Activated CD4-positive, alpha-beta T cell treated with anti-CD3 and anti-CD28 coated beads for 36 hours (primary cell): ENCODE measurements at regions of chr4 and their contacts with region 1.

Region 1: GRCh38 chr4:168183717-168184608 is 91.6 kb downstream of the ANXA10 start:
- DNase-seq: no peak
- ATAC-seq: no peak
- H3K4me3 Mint-ChIP-seq: no peak overlapping the region
- H3K27ac Mint-ChIP-seq: no peak overlapping the region
- H3K4me1 Mint-ChIP-seq: peaks cover 4% of the 10 kb centered on the region
- H3K27me3 Mint-ChIP-seq: no peaks in the 10 kb centered on the region

Region 2: DNA sequence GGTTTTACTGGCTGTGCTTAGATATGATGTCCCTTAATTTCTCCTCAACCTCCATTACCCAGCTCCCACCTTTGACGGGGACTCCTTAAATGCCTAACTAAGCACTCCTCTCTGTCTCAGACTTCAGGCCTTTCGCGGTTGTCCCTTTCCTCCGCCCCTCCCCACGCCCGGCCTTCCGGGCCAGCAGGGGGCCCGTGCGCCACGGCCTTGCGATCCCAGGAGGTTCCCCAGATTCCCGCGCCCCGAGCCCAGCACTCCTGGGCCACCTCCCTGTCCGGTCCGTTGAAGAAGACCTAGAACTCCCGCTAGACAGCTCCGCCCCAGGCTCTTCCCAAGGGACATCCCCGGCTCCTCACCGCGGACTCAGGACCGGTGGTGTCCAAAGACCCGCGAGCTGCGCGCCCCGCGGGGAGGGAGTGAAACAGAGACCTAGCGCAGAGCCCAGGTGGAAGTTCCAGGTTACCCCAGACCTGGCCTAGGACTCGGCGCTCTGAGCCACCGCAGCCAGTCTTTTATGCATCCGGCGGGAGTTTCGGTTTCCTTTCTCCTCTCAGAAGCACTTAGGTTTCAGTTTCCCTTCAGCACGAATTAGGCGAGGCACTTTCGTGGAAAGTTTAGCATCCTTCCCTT is 134.4 kb after region 1 on chr4 and contains the start of gene DDX60:
- CTCF ChIA-PET with region 1: no interaction called
- POLR2A ChIA-PET with region 1: no interaction called
- intact Hi-C with region 1: no loop called
- DNase-seq: peak; percentile 91
- ATAC-seq: peak; percentile 93
- H3K4me3 Mint-ChIP-seq: peak within 1 kb of the TSS; percentile 85
- H3K27ac Mint-ChIP-seq: peak within 1 kb of the TSS; percentile 92
- H3K4me1 Mint-ChIP-seq: peaks cover 44% of the 10 kb centered on the region
- H3K27me3 Mint-ChIP-seq: no peaks in the 10 kb centered on the region
- total RNA-seq, gene DDX60: 22.2 to 23.8 TPM

Region 3: DNA sequence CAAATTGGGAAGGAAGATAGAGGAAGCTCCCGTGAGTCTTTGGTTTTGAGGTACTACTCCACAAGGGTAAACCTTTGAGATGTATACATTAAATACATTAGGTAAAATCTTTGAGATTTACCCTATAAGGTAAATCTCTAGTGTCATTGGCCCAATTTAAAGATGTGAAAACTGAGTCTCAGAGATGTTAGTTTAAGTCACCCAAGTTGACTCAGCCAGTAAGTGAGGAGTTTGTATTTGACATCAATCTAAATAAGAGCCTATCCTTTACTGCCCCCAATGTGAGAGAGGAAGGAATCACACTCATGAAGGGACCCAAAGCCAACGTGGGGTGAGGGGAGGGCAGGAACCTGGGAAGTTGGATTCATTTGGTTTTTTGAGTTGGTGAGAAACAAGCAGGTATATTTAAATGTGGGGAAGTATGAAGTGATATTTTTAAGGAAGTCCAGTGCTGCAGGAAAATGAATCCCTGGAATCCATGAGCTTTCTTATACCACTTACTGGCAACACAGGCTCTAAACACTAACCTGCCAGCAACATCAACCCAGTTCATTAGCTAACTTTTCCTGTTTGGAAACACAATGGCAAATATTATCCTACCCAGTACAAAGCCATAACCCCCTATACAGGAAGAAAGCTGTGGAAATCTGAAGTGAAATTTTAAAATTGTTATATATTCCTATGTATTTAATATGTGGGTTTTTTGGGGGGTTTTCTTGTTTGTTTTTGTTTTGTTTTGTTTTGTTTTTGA is 368.2 kb after region 1 on chr4:
- CTCF ChIA-PET with region 1: no interaction called
- POLR2A ChIA-PET with region 1: no interaction called
- intact Hi-C with region 1: loop called in 1 of 2 experiments (anchors 2 kb)
- DNase-seq: no peak
- ATAC-seq: peak; percentile 74
- H3K4me3 Mint-ChIP-seq: no peak overlapping the region
- H3K27ac Mint-ChIP-seq: no peak overlapping the region
- H3K4me1 Mint-ChIP-seq: peaks cover 2% of the 10 kb centered on the region
- H3K27me3 Mint-ChIP-seq: no peaks in the 10 kb centered on the region

Region 4: GRCh38 chr4:169492438-169493163 is 1308.6 kb after region 1 on chr4:
- CTCF ChIA-PET with region 1: no interaction called
- POLR2A ChIA-PET with region 1: no interaction called
- intact Hi-C with region 1: loop called in 1 of 2 experiments (anchors 5 kb)
- DNase-seq: peak; percentile 41
- ATAC-seq: peak; percentile 57
- H3K4me3 Mint-ChIP-seq: no peak overlapping the region
- H3K27ac Mint-ChIP-seq: no peak overlapping the region
- H3K4me1 Mint-ChIP-seq: no peaks in the 10 kb centered on the region
- H3K27me3 Mint-ChIP-seq: no peaks in the 10 kb centered on the region

Region 5: GRCh38 chr4:169566021-169566818 is 1382.3 kb after region 1 on chr4:
- CTCF ChIA-PET with region 1: no interaction called
- POLR2A ChIA-PET with region 1: no interaction called
- intact Hi-C with region 1: loop called in 1 of 2 experiments (anchors 10 kb)
- DNase-seq: peak; percentile 35
- ATAC-seq: no peak
- H3K4me3 Mint-ChIP-seq: no peak overlapping the region
- H3K27ac Mint-ChIP-seq: peak overlapping the region; percentile 73
- H3K4me1 Mint-ChIP-seq: peaks cover 5% of the 10 kb centered on the region
- H3K27me3 Mint-ChIP-seq: no peaks in the 10 kb centered on the region